ENCODE measurements at regions of chr12 and their contacts with region 1.

Region 1: DNA sequence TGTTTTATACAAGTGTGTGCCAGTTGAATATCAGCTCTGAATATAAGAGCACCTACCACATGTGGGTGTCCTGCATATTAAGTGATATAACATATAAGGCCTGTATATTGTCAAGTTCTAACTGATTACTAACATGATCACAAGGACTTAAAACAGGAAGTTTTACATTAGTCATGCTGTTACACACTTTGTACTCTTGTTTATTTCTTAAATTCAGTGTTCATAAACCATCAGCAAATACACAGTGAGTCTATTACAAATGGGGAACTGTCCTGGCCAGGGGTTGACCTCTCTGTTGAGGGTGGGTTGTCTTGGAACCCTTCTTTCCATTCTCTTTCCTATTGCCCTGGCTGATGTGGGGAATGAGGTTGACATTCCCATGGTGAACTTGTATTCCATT is 19.1 kb downstream of the HELB start:
- DNase-seq: peak in 2 of 14 experiments; percentile 29 to 45
- ATAC-seq: no peak
- H3K4me3 ChIP-seq: no peak overlapping the region
- H3K4me3 Mint-ChIP-seq: no peak overlapping the region
- H3K27ac ChIP-seq: no peak overlapping the region
- H3K27ac Mint-ChIP-seq: peak overlapping the region; percentile 19
- H3K4me1 ChIP-seq: no peaks in the 10 kb centered on the region
- H3K4me1 Mint-ChIP-seq: peaks cover 65% of the 10 kb centered on the region
- H3K27me3 ChIP-seq: no peaks in the 10 kb centered on the region
- H3K27me3 Mint-ChIP-seq: no peaks in the 10 kb centered on the region
- CTCF ChIP-seq: no peak

Region 2: DNA sequence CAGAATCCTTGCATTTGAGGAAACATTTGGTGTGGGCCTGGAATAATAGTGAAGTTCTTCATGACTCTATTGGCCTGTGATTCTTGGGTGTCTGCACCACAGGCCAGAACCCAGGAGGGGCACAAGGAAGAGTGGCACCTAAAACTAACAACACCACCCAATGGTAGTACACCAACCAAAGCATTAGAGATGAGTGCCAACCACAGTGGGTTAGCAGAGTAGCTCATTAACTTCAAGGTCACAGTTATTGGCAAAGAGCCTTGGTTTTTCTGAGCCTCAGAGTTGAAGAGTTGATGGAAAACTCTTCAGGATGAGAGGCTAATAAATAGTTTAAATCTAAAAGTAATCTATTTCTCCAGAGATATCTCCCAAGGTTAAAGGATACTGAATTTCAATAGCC is 37.9 kb after region 1 on chr12:
- CTCF ChIA-PET with region 1: no interaction called
- POLR2A ChIA-PET with region 1: no interaction called
- intact Hi-C with region 1: loop called in 1 of 2 experiments (anchors 5 kb)
- DNase-seq: no peak
- ATAC-seq: no peak
- H3K4me3 ChIP-seq: no peak overlapping the region
- H3K4me3 Mint-ChIP-seq: no peak overlapping the region
- H3K27ac ChIP-seq: no peak overlapping the region
- H3K27ac Mint-ChIP-seq: no peak overlapping the region
- H3K4me1 ChIP-seq: no peaks in the 10 kb centered on the region
- H3K4me1 Mint-ChIP-seq: peaks cover 7% of the 10 kb centered on the region
- H3K27me3 ChIP-seq: no peaks in the 10 kb centered on the region
- H3K27me3 Mint-ChIP-seq: no peaks in the 10 kb centered on the region
- CTCF ChIP-seq: no peak

Region 3: DNA sequence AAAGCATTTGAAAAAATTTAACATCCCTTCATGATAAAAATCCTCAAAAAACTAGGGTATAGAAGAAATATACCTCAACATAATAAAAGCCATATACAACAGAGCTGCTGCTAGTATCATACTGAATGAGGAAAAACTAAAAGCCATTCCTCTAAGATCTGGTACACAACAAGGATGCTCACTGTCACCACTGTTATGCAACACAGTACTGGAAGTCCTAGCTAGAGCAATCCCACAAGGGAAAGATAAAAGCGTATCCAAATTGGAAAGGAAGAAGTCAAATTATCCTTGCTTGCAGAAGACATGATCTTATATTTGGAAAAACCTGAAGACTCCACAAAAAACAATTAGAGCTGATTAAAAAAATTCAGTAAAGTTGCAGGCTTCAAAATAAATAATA is 95.8 kb after region 1 on chr12:
- CTCF ChIA-PET with region 1: no interaction called
- POLR2A ChIA-PET with region 1: no interaction called
- intact Hi-C with region 1: loop called in 1 of 2 experiments (anchors 5 kb)
- DNase-seq: no peak
- ATAC-seq: no peak
- H3K4me3 ChIP-seq: no peak overlapping the region
- H3K4me3 Mint-ChIP-seq: no peak overlapping the region
- H3K27ac ChIP-seq: no peak overlapping the region
- H3K27ac Mint-ChIP-seq: no peak overlapping the region
- H3K4me1 ChIP-seq: no peaks in the 10 kb centered on the region
- H3K4me1 Mint-ChIP-seq: no peaks in the 10 kb centered on the region
- H3K27me3 ChIP-seq: no peaks in the 10 kb centered on the region
- H3K27me3 Mint-ChIP-seq: peaks cover 10% of the 10 kb centered on the region
- CTCF ChIP-seq: no peak

Region 4: GRCh38 chr12:66538970-66539369 is 217.5 kb after region 1 on chr12:
- CTCF ChIA-PET with region 1: no interaction called
- POLR2A ChIA-PET with region 1: no interaction called
- intact Hi-C with region 1: no loop called
- DNase-seq: no peak
- ATAC-seq: no peak
- H3K4me3 ChIP-seq: no peak overlapping the region
- H3K4me3 Mint-ChIP-seq: no peak overlapping the region
- H3K27ac ChIP-seq: no peak overlapping the region
- H3K27ac Mint-ChIP-seq: no peak overlapping the region
- H3K4me1 ChIP-seq: no peaks in the 10 kb centered on the region
- H3K4me1 Mint-ChIP-seq: no peaks in the 10 kb centered on the region
- H3K27me3 ChIP-seq: no peaks in the 10 kb centered on the region
- H3K27me3 Mint-ChIP-seq: no peaks in the 10 kb centered on the region
- CTCF ChIP-seq: no peak

Region 5: DNA sequence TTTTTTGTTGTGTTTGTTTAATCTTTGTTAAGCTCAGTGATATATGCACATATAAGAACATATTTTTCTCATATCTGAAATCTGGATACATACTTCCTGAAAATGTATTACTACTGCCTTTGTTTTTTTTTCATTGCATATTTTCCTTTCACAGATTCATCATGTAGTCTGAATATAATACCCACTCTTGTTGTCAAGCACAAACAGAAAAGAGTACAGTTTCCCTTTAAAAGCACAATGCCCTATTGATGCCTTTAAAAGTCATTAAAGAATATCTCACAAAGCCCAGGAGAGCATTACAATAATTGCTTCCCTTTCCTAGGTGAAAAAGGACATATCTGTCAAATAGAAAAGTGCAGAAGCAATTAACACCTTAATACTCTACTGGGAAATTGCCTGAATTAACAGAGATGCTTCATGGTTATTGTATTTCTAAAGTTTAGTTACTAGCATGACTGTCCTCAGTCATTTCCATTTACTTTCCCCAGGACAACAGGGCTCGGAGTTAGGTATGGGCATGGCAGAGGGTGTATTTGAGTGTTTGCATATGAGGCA is 250.0 kb after region 1 on chr12:
- CTCF ChIA-PET with region 1: no interaction called
- POLR2A ChIA-PET with region 1: no interaction called
- intact Hi-C with region 1: no loop called
- DNase-seq: no peak
- ATAC-seq: no peak
- H3K4me3 ChIP-seq: no peak overlapping the region
- H3K4me3 Mint-ChIP-seq: no peak overlapping the region
- H3K27ac ChIP-seq: no peak overlapping the region
- H3K27ac Mint-ChIP-seq: no peak overlapping the region
- H3K4me1 ChIP-seq: no peaks in the 10 kb centered on the region
- H3K4me1 Mint-ChIP-seq: no peaks in the 10 kb centered on the region
- H3K27me3 ChIP-seq: no peaks in the 10 kb centered on the region
- H3K27me3 Mint-ChIP-seq: no peaks in the 10 kb centered on the region
- CTCF ChIP-seq: no peak

Region 6: DNA sequence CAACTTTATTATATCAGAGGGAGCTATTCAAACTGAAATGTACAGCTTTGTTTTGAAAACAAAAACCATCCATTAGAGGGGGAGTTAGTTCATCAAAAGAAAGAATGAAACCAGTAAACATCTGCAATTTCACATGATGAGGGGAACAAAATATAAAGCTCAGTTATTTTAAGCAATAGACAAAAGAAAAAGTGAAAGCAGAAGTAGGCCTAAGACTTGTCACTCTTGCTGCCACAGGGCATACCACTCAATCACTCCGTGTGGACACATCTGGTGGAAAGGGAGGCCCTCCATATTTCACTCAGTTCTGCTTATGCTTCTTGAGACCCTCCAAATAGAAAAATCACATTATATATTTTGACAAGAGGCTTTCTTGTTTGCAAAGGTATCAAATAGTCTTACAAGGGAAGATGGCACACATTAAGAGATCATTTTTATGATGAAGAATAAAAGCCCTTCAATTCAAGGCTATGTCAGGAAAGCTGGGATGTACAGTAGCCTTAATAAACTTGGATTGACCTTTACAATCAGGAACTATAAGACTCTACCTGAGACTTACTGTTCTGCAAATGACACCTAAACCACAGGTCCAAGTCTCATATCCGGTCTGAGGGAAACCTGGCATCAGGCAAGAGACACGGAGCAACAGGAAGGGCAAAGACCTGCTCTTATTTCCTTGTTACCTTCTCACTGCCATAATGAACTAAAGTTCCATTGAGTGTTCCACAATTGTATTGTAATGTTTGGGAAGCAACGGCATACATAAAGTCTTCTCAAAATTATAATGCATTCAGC is 579.9 kb after region 1 on chr12:
- CTCF ChIA-PET with region 1: no interaction called
- POLR2A ChIA-PET with region 1: no interaction called
- intact Hi-C with region 1: no loop called
- DNase-seq: peak in 4 of 14 experiments; percentile 12 to 43 (median 22)
- ATAC-seq: peak; percentile 41
- H3K4me3 ChIP-seq: no peak overlapping the region
- H3K4me3 Mint-ChIP-seq: peak overlapping the region; percentile 71
- H3K27ac ChIP-seq: no peak overlapping the region
- H3K27ac Mint-ChIP-seq: peak overlapping the region; percentile 32
- H3K4me1 ChIP-seq: no peaks in the 10 kb centered on the region
- H3K4me1 Mint-ChIP-seq: peaks cover 47% of the 10 kb centered on the region
- H3K27me3 ChIP-seq: no peaks in the 10 kb centered on the region
- H3K27me3 Mint-ChIP-seq: no peaks in the 10 kb centered on the region
- CTCF ChIP-seq: no peak

Measured in CD4-positive, alpha-beta T cell (primary cell).